Activated CD4-positive, alpha-beta memory T cell treated with anti-CD3 and anti-CD28 coated beads for 36 hours (primary cell): ENCODE measurements at regions of chr1 and their contacts with region 1.

Region 1: DNA sequence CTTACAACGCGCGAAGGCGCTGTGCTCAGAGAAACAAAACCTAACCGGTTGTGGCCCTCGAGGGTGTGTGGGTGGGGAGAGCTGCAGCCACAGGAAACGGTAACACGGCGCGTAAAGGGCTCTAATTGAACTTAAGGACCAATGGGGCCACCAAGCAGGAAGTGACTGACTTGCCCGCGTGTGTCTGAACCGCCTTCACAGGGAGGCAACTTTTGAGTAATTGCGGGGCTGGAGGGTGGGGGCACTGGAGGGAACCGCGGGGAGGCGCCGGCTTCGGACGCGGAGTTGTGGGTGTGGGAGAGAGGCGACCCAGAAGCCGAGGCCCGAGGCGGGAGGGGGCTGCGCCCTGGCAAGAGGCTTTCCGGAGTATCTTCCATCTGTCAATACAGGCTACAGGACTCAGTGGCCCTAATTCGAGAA is 577 bp upstream of the PNRC2 start:
- DNase-seq: peak; percentile 97
- H3K4me3 Mint-ChIP-seq: peak overlapping the region; percentile 100
- H3K27ac Mint-ChIP-seq: peak overlapping the region; percentile 100
- H3K4me1 Mint-ChIP-seq: peaks cover 53% of the 10 kb centered on the region
- H3K27me3 Mint-ChIP-seq: no peaks in the 10 kb centered on the region

Region 2: GRCh38 chr1:23763041-23763577 is 195.9 kb before region 1 on chr1:
- CTCF ChIA-PET with region 1: no interaction called
- POLR2A ChIA-PET with region 1: no interaction called
- intact Hi-C with region 1: no loop called
- DNase-seq: no peak
- H3K4me3 Mint-ChIP-seq: no peak overlapping the region
- H3K27ac Mint-ChIP-seq: no peak overlapping the region
- H3K4me1 Mint-ChIP-seq: no peaks in the 10 kb centered on the region
- H3K27me3 Mint-ChIP-seq: no peaks in the 10 kb centered on the region

Region 3: DNA sequence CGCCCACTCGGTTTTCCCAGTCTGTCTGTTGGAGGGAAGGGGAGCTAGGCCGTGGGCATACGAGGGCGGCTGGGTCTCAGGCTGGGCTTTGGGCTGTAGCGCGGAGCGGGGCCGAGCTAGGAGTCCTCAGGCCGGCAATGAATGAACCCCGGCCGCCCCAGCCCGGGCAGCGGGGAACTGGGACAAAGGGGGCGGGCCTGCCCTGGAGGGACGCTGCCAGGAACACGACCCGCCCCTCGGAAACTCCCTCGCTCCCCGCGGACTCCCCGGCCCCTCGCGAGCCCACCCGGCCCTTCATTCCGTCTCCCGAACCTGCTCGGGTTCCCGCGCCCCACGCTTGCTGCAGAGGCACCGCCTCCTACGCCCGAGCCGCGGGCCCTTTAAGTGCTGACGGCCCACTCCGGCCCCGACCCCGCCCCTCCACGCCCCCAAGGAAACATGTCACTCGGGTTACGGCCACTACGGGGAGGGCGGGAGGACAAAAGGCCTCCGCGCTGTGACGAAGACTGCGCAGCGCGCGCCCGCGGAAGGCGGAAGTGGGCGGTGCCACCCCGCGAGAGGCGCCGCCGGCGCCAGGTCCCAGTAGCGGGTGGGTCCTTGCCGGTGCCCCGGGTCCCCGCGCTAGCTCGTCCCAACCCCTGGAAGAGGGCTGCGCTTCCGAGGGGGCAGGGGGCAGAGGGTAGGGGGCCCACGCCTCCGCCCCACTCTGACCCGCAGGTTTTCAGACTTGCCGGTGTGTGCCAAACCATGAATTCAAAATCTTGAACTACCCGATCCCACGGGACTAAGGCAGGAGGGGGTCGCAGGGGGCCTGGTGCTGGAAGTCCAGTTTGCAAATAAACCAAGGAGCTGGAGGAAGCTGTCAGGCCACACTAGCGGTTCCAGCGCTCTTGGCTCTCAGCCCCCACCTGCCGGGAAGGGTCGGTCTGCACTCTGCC is 158.4 kb before region 1 on chr1 and contains the start of gene GALE:
- CTCF ChIA-PET with region 1: no interaction called
- POLR2A ChIA-PET with region 1: no interaction called
- intact Hi-C with region 1: loop called (anchors 1 kb)
- DNase-seq: peak; percentile 98
- H3K4me3 Mint-ChIP-seq: peak within 1 kb of the TSS; percentile 94
- H3K27ac Mint-ChIP-seq: peak within 1 kb of the TSS; percentile 90
- H3K4me1 Mint-ChIP-seq: peaks cover 14% of the 10 kb centered on the region
- H3K27me3 Mint-ChIP-seq: no peaks in the 10 kb centered on the region
- total RNA-seq, gene GALE: 49.4 to 54.9 TPM

Region 4: GRCh38 chr1:23904748-23905357 is 54.2 kb before region 1 on chr1:
- CTCF ChIA-PET with region 1: no interaction called
- POLR2A ChIA-PET with region 1: no interaction called
- intact Hi-C with region 1: loop called (anchors 1 kb)
- DNase-seq: peak; percentile 78
- H3K4me3 Mint-ChIP-seq: no peak overlapping the region
- H3K27ac Mint-ChIP-seq: peak overlapping the region; percentile 1
- H3K4me1 Mint-ChIP-seq: peaks cover 26% of the 10 kb centered on the region
- H3K27me3 Mint-ChIP-seq: peaks cover 23% of the 10 kb centered on the region

Region 5: DNA sequence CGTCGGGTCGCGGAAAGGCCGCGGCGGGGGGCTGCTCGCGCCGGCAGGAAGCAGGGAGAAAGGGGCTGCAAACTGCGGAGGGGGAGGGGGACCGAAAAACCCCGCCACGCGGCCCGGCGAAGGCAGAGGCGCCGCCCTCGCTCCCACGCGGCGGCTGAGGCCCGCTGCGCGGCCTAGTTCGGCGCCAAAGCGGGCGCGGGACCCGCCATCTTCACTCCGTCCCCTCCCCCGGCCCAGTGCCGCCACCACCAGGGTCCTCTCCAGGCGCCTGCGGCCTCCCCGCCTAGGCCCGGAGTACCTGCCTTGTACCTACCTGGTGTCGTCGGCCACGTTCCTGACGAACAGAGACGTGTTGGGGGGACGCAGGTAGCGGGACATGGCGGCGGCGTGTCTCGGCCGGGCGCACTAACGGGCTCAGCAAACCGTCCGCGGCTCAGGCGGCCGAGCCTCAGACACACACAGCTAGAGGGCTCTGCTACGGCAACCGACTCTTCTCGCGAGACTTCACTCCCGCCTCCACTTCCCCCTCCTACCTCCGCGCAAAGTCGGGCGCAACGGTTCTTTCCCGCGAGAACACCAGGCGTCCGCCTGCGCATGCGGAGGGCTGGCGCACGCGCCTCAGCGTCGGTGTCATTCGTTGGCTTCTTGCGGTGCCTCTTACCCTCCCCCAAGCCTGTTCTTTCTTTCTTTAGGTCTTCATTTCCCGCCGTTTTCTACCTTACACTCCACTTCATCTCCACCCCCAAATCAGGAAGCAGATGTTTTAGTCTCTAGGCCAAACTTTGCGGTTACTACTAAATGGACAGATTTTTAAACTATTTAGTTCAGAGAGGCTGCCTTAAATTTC is 21.1 kb after region 1 on chr1 and contains the start of gene SRSF10:
- CTCF ChIA-PET with region 1: interaction called, 7 read pairs
- POLR2A ChIA-PET with region 1: interaction called, 70 read pairs
- intact Hi-C with region 1: loop called (anchors 1 kb)
- DNase-seq: peak; percentile 99
- H3K4me3 Mint-ChIP-seq: peak within 1 kb of the TSS; percentile 92
- H3K27ac Mint-ChIP-seq: peak within 1 kb of the TSS; percentile 100
- H3K4me1 Mint-ChIP-seq: peaks cover 40% of the 10 kb centered on the region
- H3K27me3 Mint-ChIP-seq: no peaks in the 10 kb centered on the region
- total RNA-seq, gene SRSF10: 175 to 184 TPM

Region 6: DNA sequence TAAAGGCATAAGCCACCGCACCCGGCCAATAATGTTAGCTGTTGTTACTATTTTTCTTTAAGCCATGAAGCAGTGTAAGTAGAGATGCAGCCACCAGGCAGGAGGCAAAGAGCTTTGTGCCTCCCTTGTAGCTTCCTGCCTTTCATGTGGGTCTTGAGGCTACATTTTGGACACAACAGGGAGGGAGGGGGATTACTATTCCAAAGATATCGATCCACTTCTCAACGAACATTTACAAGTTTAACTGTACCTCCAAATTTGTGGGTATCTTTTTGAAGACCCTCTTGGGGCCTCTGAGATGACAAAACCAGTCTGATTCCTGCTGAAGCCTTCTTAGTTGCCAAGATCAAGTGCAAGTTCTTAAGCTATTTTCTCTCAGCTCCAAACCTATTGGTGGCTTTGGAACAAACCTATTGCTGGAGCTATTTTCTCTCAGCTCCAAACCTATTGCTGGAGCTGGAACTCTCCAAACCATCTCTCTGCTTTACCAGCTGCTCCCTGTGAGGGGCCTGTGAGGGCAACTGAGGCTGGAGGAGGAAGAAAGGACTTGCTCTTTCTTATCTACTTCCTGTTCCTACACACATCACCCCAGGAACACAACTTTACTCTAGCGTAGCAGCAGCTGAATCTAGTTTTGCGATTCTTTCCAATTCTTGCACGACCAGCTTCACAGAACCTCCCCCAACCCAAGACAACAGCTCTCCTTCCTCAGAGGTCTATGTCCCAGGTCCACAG is 527.4 kb after region 1 on chr1:
- CTCF ChIA-PET with region 1: interaction called, 3 read pairs
- POLR2A ChIA-PET with region 1: no interaction called
- intact Hi-C with region 1: loop called (anchors 5 kb)
- DNase-seq: peak; percentile 47
- H3K4me3 Mint-ChIP-seq: peak overlapping the region; percentile 72
- H3K27ac Mint-ChIP-seq: peak overlapping the region; percentile 95
- H3K4me1 Mint-ChIP-seq: peaks cover 78% of the 10 kb centered on the region
- H3K27me3 Mint-ChIP-seq: no peaks in the 10 kb centered on the region